IMR-90 (cell line): ENCODE measurements at regions of chr20 and their contacts with region 1.

Region 1: DNA sequence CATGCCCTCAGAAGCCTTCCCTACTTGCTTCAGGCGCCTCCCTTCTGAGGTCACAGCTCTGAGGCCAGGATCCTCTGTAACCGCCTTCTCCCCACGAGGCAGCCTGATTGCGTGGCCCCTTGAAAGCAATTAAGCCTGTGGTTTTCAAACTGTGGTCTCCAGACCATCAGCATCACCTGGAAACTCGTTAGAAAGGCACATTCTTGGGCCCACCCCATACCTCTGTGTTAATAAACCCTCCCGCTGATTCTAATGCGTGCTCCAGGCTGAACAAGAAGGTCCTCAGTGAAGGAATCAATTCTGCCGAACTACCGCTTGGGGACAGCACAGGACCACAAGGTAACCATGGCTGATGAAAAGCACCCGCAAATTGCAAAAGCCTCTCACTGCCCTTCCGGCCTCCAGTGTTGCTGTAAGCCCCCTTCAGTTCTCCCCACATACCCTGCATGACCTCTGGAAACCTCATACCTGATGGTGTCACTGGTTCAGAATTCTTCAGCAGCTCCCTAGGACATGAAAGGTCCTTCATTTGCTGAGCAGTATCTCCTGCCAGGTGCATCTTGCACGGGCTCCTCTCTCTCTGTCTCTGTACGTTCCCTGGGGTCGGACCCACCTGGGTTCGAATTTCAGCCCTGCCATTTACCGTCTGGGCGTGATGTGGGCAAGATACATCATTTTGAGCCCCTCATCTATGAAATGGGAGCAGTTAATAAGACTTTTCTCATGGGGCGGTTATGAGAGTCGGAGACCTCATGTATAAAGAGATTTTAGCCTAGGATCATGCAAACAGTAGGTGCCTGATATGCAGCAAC is 93.3 kb upstream of the RNF24 start:
- DNase-seq: peak; percentile 88
- ATAC-seq: peak; percentile 97
- H3K4me3 ChIP-seq: no peak overlapping the region
- H3K27ac ChIP-seq: no peak overlapping the region
- H3K4me1 ChIP-seq: peaks cover 3% of the 10 kb centered on the region; the same call in 1 of the 2 replicates
- H3K27me3 ChIP-seq: no peaks in the 10 kb centered on the region
- CTCF ChIP-seq: peak; percentile 99
- POLR2A ChIP-seq: peak; percentile 58; the same call in 1 of the 2 replicates
- RAD21 ChIP-seq: peak; percentile 99

Region 2: GRCh38 chr20:4091490-4092479 is 16.9 kb before region 1 on chr20:
- CTCF ChIA-PET with region 1: no interaction called
- POLR2A ChIA-PET with region 1: no interaction called
- dilution Hi-C with region 1: no loop called
- in situ Hi-C with region 1: no loop called
- intact Hi-C with region 1: no loop called
- DNase-seq: peak; percentile 58
- ATAC-seq: peak; percentile 69
- H3K4me3 ChIP-seq: no peak overlapping the region
- H3K27ac ChIP-seq: peak overlapping the region; percentile 79
- H3K4me1 ChIP-seq: peaks cover 13% of the 10 kb centered on the region
- H3K27me3 ChIP-seq: no peaks in the 10 kb centered on the region
- CTCF ChIP-seq: peak; percentile 76
- POLR2A ChIP-seq: peak; percentile 20
- RAD21 ChIP-seq: peak; percentile 69

Region 3: GRCh38 chr20:4435225-4435624 is 326.5 kb after region 1 on chr20:
- CTCF ChIA-PET with region 1: no interaction called
- POLR2A ChIA-PET with region 1: no interaction called
- dilution Hi-C with region 1: no loop called
- in situ Hi-C with region 1: no loop called
- intact Hi-C with region 1: loop called (anchors 5 kb)
- DNase-seq: peak; percentile 71
- ATAC-seq: peak; percentile 83
- H3K4me3 ChIP-seq: no peak overlapping the region
- H3K27ac ChIP-seq: peak overlapping the region; percentile 38; the same call in 1 of the 2 replicates
- H3K4me1 ChIP-seq: peaks cover 13% of the 10 kb centered on the region
- H3K27me3 ChIP-seq: no peaks in the 10 kb centered on the region
- CTCF ChIP-seq: no peak
- POLR2A ChIP-seq: no peak
- RAD21 ChIP-seq: no peak

Region 4: GRCh38 chr20:4592316-4593148 is 483.8 kb after region 1 on chr20:
- CTCF ChIA-PET with region 1: no interaction called
- POLR2A ChIA-PET with region 1: no interaction called
- dilution Hi-C with region 1: no loop called
- in situ Hi-C with region 1: loop called (anchors 5 kb)
- intact Hi-C with region 1: loop called (anchors 1 kb)
- DNase-seq: no peak
- ATAC-seq: peak; percentile 96
- H3K4me3 ChIP-seq: peak overlapping the region; percentile 44
- H3K27ac ChIP-seq: peak overlapping the region; percentile 35; the same call in 1 of the 2 replicates
- H3K4me1 ChIP-seq: peaks cover 3% of the 10 kb centered on the region; the same call in 1 of the 2 replicates
- H3K27me3 ChIP-seq: no peaks in the 10 kb centered on the region
- CTCF ChIP-seq: peak; percentile 91
- POLR2A ChIP-seq: peak; percentile 29; the same call in 1 of the 2 replicates
- RAD21 ChIP-seq: peak; percentile 99